HepG2 (cell line): ENCODE measurements at regions of chr14 and their contacts with region 1.

Region 1: DNA sequence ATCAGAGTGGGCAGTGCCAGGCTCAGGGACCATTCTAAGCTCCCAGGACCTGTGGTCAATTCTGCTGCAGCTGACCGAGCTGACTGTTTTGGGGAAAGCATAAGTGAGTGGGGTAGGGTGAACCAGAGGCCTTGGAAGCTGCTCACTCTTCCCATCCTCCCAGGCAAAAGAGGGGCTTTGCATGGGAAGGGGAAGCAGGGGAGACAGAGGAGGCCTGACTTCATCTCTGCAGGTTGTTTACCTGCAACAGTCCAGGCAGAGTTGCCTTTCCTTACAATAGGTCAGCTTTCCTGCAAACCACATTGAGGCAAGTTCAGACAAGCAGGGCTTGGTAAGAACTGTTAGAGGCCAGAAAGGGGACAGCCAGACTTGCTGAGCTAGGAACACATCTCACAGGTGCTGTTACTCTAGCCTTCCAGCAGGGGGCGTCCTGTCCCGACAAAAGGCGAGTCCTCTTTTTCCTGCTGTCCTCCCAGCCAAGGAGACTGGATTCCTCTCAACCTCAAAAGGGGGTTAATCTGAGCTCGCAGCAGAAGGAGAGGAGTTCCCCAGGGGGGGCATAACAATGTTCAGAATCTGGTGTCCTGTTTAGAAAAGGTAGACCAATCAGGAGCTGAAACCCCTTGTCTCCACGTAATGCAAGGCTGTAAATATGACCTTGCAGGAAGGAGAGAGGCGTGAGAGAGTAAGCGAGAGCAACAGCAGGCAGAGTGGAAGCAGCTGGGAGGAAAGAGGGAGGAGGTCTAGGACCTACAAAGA is 4.3 kb upstream of the DHRS2 start:
- DNase-seq: peak; percentile 96
- ATAC-seq: peak; percentile 28
- H3K4me3 ChIP-seq: peak overlapping the region; percentile 35 to 59 (median 41)
- H3K27ac ChIP-seq: peak overlapping the region; percentile 48
- H3K4me1 ChIP-seq: peaks cover 68% of the 10 kb centered on the region
- H3K27me3 ChIP-seq: no peaks in the 10 kb centered on the region; a peak in 1 of 5 replicates
- CTCF ChIP-seq: no peak
- EP300 ChIP-seq: peak; percentile 9 to 39; a peak in 1 of 4 replicates
- POLR2A ChIP-seq: no peak
- RAD21 ChIP-seq: peak; percentile 93

Region 2: DNA sequence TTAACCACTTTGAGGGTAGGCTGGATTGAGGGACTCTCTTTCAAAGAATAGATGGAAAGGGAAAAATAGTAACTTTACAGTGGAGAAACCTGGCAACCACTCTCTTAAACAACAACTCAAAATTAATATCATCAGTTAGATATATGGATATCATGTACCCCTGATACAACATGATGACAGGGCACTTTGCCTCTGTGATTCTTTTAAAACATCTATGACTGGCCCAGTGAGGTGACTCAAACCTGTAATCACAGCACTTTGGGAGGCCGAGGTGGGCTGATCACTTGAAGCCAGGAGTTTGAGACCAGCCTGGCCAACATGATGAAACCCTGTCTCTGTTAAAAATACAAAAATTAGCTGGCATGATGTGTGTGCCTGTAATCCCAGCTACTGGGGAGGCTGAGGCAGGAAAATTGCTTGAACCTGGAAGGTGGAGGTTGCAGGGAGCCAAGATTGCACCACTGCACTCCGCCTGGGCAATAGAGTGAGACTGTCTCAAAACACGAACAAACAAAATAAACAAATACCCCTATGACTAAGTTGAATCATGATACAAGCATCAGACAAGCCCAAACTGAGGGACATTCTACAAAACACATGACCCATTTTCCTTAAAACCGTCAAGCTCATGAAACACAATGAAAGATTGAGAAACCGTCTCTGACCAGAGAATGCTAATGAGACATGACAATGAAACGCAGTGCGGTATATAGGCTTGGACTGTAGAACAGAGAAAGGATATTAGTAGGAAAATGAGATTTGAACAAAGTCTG is 422.0 kb before region 1 on chr14:
- CTCF ChIA-PET with region 1: no interaction called
- POLR2A ChIA-PET with region 1: no interaction called
- in situ Hi-C with region 1: no loop called
- intact Hi-C with region 1: no loop called
- DNase-seq: no peak
- ATAC-seq: no peak
- H3K4me3 ChIP-seq: no peak overlapping the region
- H3K27ac ChIP-seq: no peak overlapping the region
- H3K4me1 ChIP-seq: no peaks in the 10 kb centered on the region
- H3K27me3 ChIP-seq: peaks cover 0 to 15% of the 10 kb centered on the region in 2 experiments; a peak in 1 of 5 replicates
- CTCF ChIP-seq: no peak
- EP300 ChIP-seq: no peak
- POLR2A ChIP-seq: no peak
- RAD21 ChIP-seq: no peak

Region 3: GRCh38 chr14:23605931-23606585 is 25.8 kb before region 1 on chr14:
- CTCF ChIA-PET with region 1: interaction called, 8 read pairs
- POLR2A ChIA-PET with region 1: interaction called, 1,105 read pairs
- in situ Hi-C with region 1: no loop called
- intact Hi-C with region 1: no loop called
- DNase-seq: no peak
- ATAC-seq: no peak
- H3K4me3 ChIP-seq: no peak overlapping the region
- H3K27ac ChIP-seq: no peak overlapping the region
- H3K4me1 ChIP-seq: peaks cover 88% of the 10 kb centered on the region
- H3K27me3 ChIP-seq: no peaks in the 10 kb centered on the region
- CTCF ChIP-seq: no peak
- EP300 ChIP-seq: no peak
- POLR2A ChIP-seq: 0 out of 4 replicates have a peak, but pooled peaks of 1 of the 2 experiments have one; percentile 7
- RAD21 ChIP-seq: no peak

Region 4: DNA sequence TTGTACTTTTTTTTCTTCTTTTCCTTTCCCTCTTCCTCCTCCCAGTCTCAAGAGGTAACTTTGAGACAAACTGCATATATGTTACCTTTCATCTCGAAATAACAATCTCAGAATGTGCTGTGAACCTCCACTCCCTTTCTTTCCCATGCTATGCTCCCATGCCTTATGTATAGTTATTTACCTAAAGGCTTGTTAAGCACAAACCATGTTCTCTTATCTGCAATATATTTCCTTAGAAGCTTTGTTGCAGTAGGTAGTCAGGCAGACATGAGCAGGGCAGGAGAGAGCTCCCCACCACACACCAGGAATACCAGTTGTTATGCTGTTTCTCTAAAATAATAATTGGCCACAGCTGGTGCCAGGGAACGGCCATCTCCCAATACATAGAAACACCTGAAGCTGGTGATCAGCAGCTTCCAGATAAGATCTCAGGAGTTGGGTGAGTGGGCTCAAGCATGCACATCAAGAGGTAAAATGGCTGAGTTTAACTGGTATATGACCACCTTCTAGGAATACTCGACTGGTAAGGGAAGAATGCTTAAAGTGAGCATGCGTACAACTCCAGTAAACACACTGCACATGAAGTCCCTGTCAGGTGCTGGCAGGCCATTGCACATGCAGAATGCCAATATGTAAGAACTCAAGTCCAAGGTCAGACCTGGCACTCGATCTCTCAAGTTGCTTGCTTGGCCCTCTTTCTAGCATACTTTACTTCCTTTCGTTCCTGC is 10.5 kb before region 1 on chr14:
- CTCF ChIA-PET with region 1: interaction called, 14 read pairs
- POLR2A ChIA-PET with region 1: interaction called, 1,105 read pairs
- in situ Hi-C with region 1: no loop called
- intact Hi-C with region 1: no loop called
- DNase-seq: no peak
- ATAC-seq: peak; percentile 41
- H3K4me3 ChIP-seq: no peak overlapping the region
- H3K27ac ChIP-seq: no peak overlapping the region
- H3K4me1 ChIP-seq: peaks cover 44% of the 10 kb centered on the region
- H3K27me3 ChIP-seq: no peaks in the 10 kb centered on the region
- CTCF ChIP-seq: no peak
- EP300 ChIP-seq: no peak
- POLR2A ChIP-seq: no peak
- RAD21 ChIP-seq: no peak

Region 5: DNA sequence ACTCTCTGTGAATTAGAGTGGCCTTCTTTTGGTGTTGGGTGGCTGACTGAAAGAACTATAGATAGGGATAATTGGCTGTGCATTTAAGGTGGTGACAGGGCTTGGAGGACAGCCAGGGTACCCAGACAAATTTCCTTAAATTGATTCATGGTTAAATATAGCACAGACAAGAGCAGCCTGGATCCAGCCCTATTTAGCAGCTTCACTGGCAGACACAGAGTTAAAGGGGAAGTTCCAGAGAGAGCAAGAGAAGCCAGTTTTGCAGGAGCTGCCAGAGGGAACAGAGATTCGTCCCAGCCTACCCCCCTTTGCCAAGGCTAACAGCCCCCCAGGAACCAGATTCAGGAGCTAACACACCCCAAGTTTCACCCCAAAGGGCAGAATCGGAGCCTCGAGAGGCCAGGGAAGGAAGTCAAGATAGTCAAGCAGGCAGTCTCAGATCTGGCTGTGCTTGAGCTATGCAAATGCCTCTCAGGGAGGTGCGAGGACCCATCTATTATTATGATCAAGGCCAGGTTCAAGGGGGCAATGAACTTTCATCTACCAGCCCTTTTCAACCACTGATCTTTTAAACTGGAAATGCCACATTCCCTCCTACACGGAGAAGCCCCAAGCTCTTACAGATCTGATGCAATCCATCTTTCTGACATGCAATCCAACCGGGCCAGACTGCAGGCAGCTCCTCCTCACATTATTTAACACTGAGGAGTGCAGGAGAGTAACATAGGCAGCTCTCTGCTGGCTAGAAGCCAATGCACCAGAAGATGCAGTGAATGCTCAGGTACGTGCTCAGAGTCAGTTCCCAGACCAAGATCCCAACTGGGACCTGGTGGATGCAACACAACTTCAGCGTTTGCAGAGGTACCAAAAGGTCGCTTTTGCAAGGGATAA is 62.4 kb after region 1 on chr14:
- CTCF ChIA-PET with region 1: no interaction called
- POLR2A ChIA-PET with region 1: interaction called, 60 read pairs
- in situ Hi-C with region 1: no loop called
- intact Hi-C with region 1: no loop called
- DNase-seq: peak; percentile 70
- ATAC-seq: peak; percentile 76
- H3K4me3 ChIP-seq: peak overlapping the region; percentile 14 to 43 (median 25); a peak in 5 of 6 replicates
- H3K27ac ChIP-seq: peak overlapping the region; percentile 37
- H3K4me1 ChIP-seq: peaks cover 65% of the 10 kb centered on the region
- H3K27me3 ChIP-seq: no peaks in the 10 kb centered on the region
- CTCF ChIP-seq: no peak
- EP300 ChIP-seq: peak; percentile 34 to 76; a peak in 3 of 4 replicates
- POLR2A ChIP-seq: no peak
- RAD21 ChIP-seq: no peak

Region 6: DNA sequence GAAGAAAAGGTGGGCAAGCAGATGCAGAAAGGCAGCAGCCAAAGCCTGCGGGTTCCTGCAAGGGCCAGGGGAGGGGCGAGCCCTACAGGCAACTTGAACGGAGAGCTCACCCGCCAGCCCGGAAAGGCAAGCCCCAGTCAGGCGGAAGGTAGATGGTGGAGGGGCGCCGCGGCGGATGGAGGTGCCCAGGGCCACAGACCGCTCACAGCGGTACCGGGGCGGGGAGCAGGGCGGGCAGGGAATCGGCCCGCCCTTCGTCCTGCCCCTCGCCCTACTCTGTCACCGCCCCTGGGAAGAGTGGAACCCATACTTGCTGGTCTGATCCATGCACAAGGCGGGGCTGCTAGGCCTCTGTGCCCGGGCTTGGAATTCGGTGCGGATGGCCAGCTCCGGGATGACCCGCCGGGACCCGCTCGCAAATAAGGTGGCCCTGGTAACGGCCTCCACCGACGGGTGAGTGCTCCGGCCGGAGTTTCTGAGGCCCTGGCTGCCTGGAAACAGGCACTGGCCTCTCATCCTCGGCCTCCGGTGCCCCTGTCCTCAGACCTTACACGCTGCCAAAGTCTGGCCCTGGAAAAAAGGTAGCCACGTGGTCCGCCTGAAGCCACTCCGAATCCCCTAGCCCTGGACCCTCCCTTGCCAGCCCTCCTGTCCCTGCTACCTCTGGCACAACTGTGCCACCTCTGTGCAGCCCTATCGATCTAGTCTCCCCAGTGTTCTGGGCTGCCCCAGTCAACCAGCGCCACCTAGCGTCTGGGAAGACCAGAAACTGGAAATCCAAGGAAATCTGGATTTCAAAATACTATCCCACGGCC is 321.8 kb after region 1 on chr14 and contains the start of gene DHRS4:
- CTCF ChIA-PET with region 1: interaction called, 5 read pairs
- POLR2A ChIA-PET with region 1: interaction called, 17 read pairs
- in situ Hi-C with region 1: no loop called
- intact Hi-C with region 1: no loop called
- DNase-seq: peak; percentile 94
- ATAC-seq: peak; percentile 98
- H3K4me3 ChIP-seq: peak within 1 kb of the TSS; percentile 73 to 90 (median 85)
- H3K27ac ChIP-seq: peak within 1 kb of the TSS; percentile 74
- H3K4me1 ChIP-seq: peaks cover 27% of the 10 kb centered on the region
- H3K27me3 ChIP-seq: no peaks in the 10 kb centered on the region
- CTCF ChIP-seq: peak; percentile 100
- EP300 ChIP-seq: peak; percentile 6 to 60; a peak in 3 of 4 replicates
- POLR2A ChIP-seq: peak; percentile 97 to 99
- RAD21 ChIP-seq: peak; percentile 93
- total RNA-seq, gene DHRS4: 45.1 and 49.4 TPM in 2 replicates